Astrocyte of the cerebellum (primary cell): ENCODE measurements at regions of chr2 and their contacts with region 1.

Region 1: DNA sequence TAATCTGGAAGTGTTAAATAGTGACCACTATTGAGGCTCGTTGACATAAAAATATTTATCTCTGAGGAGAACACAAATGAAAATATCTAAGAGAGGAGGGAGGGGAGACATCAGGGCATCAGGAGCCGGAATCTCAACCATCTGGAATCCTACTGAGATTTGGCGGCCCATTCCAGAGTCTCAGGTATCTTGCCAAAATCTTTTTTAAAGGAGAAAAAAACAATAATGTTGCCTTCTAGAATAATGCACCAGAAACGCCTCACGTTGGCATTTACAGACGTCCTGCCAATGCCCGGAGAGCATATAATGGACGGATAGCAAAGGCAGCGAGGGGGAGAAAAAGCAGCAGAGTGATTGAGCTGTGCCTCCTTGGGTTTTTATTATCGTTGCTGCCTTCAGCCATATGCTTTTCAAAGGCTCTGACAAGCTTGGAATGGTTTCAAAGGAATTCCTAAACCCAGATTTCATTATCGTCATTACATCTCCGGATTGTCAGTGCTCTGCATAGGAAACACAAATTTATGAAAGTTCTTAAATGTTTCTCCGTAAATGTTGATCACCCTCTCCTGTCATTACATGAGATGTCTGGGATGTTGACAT is 30.9 kb upstream of the EGR4 start:
- DNase-seq: no peak
- H3K4me3 ChIP-seq: no peak overlapping the region
- CTCF ChIP-seq: no peak

Region 2: DNA sequence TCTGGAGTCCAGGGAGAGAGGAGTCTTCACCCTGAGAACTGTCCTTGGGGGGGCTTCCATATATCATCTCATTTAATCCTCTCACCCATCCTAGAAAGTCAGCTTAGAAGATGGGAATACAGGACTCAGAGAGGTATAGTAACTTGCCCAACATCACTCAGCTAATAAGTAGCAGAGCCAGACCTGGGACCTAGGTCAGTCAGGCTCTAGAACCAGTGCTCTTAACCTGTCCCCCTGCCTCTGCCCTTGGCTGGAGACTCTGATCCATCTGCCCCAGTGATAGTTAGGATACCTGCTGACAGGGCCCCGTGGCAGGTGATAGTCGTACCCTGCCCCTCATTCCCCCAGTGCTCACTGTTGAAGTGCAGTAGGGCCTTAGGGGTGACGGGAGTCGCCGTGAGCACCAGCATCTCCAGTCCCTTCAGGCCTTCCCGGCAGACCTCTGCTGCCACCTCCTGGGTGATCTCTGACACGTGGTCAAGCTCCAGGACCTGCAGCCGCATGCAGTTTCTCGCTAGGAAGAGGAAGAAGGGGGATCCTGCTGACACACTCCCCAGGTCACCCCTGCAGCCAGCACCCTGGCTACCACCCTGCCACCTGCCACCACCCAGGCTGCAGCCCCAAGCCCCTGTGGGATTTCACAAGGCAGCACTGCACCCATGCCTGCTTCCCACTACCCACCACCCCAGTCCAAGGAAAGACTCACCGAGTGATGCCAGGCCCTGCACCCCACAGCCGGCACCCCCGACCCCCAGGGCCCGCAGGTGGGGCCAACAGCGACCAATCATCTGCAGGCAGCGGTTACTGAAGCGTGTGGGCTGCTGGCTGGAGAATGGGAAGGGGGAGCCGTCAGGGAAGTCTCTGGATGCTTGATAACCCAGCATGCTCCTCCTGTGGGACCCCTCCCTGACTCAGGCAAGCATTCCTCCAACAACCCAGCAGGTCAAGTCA is 63.9 kb before region 1 on chr2:
- in situ Hi-C with region 1: no loop called
- DNase-seq: peak; percentile 13
- H3K4me3 ChIP-seq: no peak overlapping the region
- CTCF ChIP-seq: peak; percentile 60

Region 3: DNA sequence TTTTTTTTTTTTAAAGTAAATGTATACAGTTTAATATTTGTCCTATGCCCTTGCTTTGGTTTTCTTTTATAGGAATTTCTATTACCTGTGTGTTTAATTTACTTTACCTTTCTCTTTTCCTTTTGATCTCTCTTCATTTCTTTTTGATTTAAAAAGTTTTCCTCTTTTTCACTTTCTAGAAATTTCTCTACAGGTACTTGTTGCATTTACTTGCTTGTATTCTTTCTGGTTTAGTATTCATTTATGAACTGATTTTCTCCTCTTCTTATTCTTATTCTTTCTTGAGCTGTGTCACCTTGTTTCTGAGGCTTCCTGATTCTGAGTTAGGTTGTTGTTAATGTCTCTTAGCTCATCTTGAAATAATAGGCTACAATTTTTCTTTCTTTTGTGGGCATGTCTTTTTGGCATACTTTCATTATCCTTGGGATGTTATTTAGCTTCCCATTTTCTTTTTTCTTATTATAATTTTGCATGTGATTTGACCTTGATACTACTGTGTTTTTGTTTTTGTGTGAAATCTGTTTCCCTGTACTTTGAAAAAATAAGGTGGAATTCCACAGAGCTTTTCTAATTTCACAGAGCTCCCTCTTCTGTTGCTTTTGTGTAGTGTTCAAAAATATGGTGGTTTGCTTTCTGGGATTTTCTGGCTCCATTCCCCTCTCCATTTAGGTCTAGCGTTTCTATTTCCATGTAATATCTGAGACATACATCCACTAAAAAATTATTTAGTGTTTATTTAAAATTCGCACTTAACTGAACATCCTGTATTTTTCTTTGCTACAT is 35.9 kb after region 1 on chr2:
- in situ Hi-C with region 1: loop called (anchors 5 kb)
- DNase-seq: no peak
- H3K4me3 ChIP-seq: no peak overlapping the region
- CTCF ChIP-seq: peak; percentile 45